Activated T-helper 2 cell treated with anti-CD3 and anti-CD28 coated beads, Interferon-gamma antibody, Interleukin-2, Interleukin-4, amounts not matched to agents 10 μg/mL and 5 μg/mL and 100 μg/mL, durations not matched to agents 14 hours and 24 hours and 36 hours (primary cell): ENCODE measurements at regions of chr1 and their contacts with region 1.

Region 1: DNA sequence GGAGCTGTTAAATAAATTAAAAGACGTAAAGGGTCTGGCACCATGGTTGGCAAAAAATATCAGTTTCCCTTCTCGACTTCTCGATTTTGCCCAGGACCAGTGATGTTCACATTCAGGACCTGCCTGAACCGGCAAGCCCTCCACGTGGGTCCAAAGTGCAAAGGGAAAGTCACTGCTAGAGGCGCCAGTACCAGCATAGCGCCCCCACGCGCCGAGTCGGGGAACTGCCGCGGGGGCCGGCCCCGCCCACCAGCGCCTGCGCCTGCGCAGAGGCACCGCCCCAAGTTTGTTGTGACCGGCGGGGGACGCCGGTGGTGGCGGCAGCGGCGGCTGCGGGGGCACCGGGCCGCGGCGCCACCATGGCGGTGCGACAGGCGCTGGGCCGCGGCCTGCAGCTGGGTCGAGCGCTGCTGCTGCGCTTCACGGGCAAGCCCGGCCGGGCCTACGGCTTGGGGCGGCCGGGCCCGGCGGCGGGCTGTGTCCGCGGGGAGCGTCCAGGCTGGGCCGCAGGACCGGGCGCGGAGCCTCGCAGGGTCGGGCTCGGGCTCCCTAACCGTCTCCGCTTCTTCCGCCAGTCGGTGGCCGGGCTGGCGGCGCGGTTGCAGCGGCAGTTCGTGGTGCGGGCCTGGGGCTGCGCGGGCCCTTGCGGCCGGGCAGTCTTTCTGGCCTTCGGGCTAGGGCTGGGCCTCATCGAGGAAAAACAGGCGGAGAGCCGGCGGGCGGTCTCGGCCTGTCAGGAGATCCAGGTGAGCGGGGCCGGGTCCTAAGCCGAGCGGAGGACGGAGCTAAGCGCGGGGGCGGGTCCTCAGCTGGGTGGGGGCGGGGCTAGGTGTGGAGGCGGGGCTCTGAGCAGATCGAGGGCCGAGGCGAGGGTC is at the start of gene PINK1:
- DNase-seq: peak; percentile 86
- H3K4me3 Mint-ChIP-seq: peak within 1 kb of the TSS; percentile 80
- H3K27ac Mint-ChIP-seq: peak within 1 kb of the TSS; percentile 33
- H3K4me1 Mint-ChIP-seq: peaks cover 6% of the 10 kb centered on the region
- H3K27me3 Mint-ChIP-seq: peaks cover 1% of the 10 kb centered on the region
- total RNA-seq, gene PINK1: 3.8 and 4.7 TPM in 2 replicates

Region 2: GRCh38 chr1:20361806-20362640 is 271.4 kb before region 1 on chr1:
- intact Hi-C with region 1: no loop called
- DNase-seq: no peak
- H3K4me3 Mint-ChIP-seq: no peak overlapping the region
- H3K27ac Mint-ChIP-seq: no peak overlapping the region
- H3K4me1 Mint-ChIP-seq: peaks cover 8% of the 10 kb centered on the region
- H3K27me3 Mint-ChIP-seq: peaks cover 59% of the 10 kb centered on the region

Region 3: GRCh38 chr1:20574686-20575540 is 58.5 kb before region 1 on chr1:
- intact Hi-C with region 1: loop called (anchors 2 kb)
- DNase-seq: peak; percentile 62
- H3K4me3 Mint-ChIP-seq: no peak overlapping the region
- H3K27ac Mint-ChIP-seq: no peak overlapping the region
- H3K4me1 Mint-ChIP-seq: no peaks in the 10 kb centered on the region
- H3K27me3 Mint-ChIP-seq: peaks cover 11% of the 10 kb centered on the region

Region 4: DNA sequence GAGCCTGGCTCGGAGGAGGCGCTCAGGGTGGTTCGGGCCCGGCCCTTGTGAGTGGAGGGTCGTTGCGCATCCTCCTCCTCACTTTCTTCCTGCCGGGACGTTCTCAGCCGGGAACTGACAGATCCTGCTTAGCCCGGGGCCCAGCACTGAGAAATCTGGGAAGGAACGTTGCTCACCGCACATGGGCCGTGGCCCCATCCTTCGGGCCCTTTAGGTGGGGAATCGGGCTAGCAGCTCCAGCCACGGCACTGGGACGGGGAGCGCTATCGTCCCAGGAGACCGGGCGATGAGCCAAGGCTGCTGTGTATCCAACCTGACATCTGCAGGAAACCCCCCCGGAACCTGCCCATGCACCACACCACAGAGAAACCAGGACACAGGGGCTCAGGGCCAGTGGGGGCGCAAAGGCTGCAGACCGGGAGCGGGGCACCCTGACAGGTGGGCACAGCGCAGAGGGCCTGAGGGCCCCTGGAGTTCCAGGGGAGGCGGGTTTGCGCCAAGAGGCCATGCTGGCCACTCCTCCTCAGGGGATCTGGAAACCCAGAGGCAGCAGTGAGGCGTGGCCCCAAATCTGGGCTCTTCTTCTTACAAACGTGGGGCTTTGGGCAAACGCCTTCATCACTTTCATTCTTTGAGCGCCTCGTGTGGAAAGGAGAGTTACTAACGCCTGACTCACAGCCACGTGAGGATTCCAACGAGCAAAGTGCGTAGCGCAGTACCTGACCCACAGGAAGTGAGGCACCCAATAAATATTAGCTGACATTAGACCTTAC is 99.3 kb after region 1 on chr1 and contains the start of gene SH2D5:
- intact Hi-C with region 1: no loop called
- DNase-seq: peak; percentile 60
- H3K4me3 Mint-ChIP-seq: peak within 1 kb of the TSS; percentile 84
- H3K27ac Mint-ChIP-seq: no peak within 1 kb of the TSS
- H3K4me1 Mint-ChIP-seq: peaks cover 11% of the 10 kb centered on the region
- H3K27me3 Mint-ChIP-seq: peaks cover 37% of the 10 kb centered on the region
- total RNA-seq, gene SH2D5: 0.05 and 0.16 TPM in 2 replicates